Thyroid gland (tissue), 4 donors: ENCODE measurements at regions of chr3 and their contacts with region 1.

Region 1: DNA sequence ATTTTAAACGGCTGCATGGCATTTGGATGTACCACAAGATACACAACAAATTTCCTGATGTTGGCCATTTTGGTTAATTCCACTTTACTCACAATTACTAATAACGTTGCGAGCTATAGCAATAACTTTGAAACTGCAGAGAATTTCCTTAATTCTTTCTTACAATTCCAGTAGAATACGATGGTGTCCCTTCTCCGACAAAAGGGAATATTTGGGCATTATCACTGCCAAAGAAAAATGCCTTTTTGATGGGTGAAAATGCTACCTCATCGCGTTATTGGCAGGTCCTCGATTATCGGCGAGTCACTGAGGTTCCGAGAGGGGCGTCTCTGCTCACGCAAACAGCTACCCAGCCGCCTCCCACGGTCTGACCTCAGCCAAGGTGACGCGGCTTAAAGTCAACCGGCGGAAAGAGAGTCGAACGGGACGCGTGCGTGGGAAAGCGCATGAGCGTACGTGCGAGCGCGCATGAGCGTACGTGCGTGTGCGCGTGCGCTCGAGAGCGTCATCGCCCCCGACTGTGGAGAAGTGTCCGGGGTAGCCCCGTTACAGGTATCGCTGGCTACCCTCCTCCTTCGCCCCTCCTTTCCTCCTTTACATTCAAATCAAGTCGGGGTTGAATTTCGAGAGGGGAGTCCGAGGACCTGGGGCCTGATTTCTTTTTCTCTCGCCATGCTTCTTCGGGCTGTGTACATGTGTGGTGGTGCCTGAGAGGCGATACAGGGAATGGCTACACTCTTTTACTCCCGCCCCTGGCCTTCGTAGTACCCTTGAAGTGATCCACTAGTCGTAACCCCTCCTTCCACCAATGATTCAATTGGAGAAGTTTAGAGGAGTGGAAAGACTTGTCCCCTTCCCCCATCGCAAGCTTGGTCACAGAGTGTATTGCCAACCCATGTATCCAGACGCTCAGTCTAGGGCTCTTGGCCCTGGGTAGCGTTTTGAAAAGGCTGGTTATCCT is at the start of gene OXSM:
- DNase-seq: peak; percentile 93
- H3K4me3 ChIP-seq: peak within 1 kb of the TSS; percentile 42 to 67 (median 66)
- H3K27ac ChIP-seq: peak within 1 kb of the TSS; percentile 74 to 89 (median 86)
- H3K4me1 ChIP-seq: peaks cover 6 to 19% of the 10 kb centered on the region in 2 donors
- H3K27me3 ChIP-seq: no peaks in the 10 kb centered on the region
- CTCF ChIP-seq: peak in 1 of 6 experiments; percentile 3
- POLR2A ChIP-seq: peak; percentile 9 to 96
- total RNA-seq, gene OXSM: 13.4 to 40.7 (median 14.5) TPM

Region 2: GRCh38 chr3:25678581-25678980 is 111.3 kb before region 1 on chr3:
- intact Hi-C with region 1: loop called (anchors 10 kb)
- DNase-seq: no peak
- H3K4me3 ChIP-seq: no peak overlapping the region
- H3K27ac ChIP-seq: no peak overlapping the region
- H3K4me1 ChIP-seq: no peaks in the 10 kb centered on the region
- H3K27me3 ChIP-seq: no peaks in the 10 kb centered on the region
- CTCF ChIP-seq: no peak
- POLR2A ChIP-seq: no peak